ENCODE measurements at regions of chr6 and their contacts with region 1.

Region 1: DNA sequence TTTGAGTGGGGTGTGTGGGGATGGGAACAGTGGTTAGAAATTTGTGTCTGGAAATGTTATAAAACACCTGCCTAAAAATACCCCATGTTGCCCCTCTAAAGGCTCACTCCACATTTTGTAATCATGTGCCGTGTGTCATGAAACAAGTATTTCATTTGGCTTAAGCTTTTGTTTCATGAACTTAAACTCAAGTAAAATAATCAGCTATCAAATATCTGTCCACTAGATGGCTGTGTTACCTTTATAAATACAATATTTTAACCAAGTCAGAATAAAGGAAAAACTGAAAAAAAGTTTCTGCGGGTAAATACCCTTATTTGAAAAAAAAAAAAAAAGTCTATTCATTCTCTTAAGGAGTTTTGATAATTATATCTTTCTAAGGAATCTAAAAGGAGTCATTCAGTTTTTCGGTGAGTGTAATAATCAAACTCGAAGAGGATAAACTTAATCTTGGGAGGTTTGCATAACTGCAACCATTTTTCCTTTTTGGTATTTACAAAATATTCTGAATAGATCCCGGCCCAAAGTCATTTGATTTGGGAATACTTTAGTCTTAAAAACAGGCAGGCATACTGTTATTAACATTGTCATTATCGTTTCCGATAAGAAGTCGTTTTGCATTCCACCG is 29.9 kb upstream of the MTRF1L start:
- DNase-seq: no peak
- H3K4me3 ChIP-seq: no peak overlapping the region
- H3K27ac ChIP-seq: no peak overlapping the region
- H3K4me1 ChIP-seq: no peaks in the 10 kb centered on the region
- H3K27me3 ChIP-seq: no peaks in the 10 kb centered on the region
- CTCF ChIP-seq: peak; percentile 34

Region 2: DNA sequence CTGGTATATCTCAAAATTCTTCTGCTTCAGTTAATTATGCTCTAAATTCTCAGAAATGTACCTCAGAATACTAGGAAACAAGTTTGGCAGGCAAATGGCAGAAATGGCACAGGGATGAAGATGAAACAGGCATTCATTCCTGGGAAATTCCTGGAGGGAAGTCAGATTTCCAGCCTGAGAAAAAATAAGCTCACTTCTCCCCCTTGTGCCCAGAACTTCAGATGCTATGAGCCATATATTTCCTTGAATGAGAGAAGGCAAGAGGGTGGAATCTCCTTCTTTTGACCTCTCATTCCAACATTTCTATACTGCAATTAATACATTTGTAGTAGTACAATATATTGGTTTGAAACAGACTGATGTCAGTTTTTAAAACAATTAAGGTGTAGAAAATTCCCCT is 75.9 kb after region 1 on chr6:
- intact Hi-C with region 1: loop called (anchors 5 kb)
- DNase-seq: no peak
- H3K4me3 ChIP-seq: no peak overlapping the region
- H3K27ac ChIP-seq: no peak overlapping the region
- H3K4me1 ChIP-seq: no peaks in the 10 kb centered on the region
- H3K27me3 ChIP-seq: no peaks in the 10 kb centered on the region
- CTCF ChIP-seq: no peak

Region 3: DNA sequence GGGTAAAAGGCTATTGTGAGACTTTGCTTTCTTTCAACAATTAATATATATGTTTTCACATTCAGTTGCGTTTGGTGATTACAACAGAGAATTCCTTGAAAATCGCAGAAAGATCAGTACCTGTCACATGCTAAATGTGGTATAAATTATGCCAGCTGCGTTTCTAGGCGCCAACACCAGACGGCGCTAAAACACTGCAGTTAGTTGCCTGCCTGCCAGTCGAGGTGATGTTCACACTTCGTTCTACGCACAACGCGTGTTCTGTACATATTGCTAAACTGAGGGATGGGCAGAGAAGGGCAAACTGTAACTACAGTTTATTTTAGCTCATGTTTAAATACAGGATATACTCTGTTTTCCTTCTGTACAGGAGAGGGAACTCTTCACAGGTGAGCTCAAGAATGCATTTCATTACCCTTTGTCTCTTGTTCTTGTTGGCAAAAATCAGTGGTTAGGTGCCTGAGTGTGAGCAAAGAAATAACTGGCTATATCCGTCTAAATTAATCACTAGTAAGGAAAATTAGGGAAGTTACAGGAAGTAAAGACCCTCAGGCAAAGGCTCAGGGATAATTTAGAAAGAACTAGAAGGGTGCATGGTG is 198.8 kb after region 1 on chr6:
- intact Hi-C with region 1: loop called (anchors 10 kb)
- DNase-seq: peak; percentile 61
- H3K4me3 ChIP-seq: no peak overlapping the region
- H3K27ac ChIP-seq: no peak overlapping the region
- H3K4me1 ChIP-seq: no peaks in the 10 kb centered on the region
- H3K27me3 ChIP-seq: no peaks in the 10 kb centered on the region
- CTCF ChIP-seq: peak; percentile 83

Region 4: GRCh38 chr6:153312641-153313040 is 280.3 kb after region 1 on chr6:
- intact Hi-C with region 1: loop called (anchors 10 kb)
- DNase-seq: peak; percentile 35
- H3K4me3 ChIP-seq: no peak overlapping the region
- H3K27ac ChIP-seq: no peak overlapping the region
- H3K4me1 ChIP-seq: no peaks in the 10 kb centered on the region
- H3K27me3 ChIP-seq: no peaks in the 10 kb centered on the region
- CTCF ChIP-seq: peak; percentile 38

Region 5: DNA sequence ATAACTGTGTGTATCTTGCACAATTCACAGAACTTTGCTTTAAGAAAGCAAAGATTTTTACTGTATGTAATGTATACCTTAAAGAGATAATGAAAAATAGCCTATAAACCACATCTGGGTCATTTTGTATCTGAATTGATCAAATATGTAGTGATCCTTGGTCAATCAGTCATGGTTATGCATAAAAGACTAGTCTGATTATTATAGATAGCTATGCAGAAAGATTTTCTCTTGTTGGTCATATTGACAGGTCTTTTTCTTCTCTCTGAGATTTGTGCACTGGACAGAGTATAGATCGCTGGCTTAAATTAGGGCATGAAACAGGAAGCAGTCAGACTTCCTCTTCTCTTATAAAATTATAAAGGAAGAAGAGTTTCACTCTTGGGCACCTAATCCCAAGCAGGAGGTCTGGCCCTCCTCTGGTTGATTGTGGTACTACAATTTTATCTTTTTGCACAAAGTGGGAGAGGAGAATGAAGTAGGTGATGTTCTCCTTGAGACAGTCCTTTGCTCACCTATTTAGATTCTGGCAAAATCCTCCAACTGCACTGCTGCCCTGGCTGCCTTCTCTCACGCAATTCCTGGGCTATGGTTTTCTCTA is 479.6 kb after region 1 on chr6:
- intact Hi-C with region 1: loop called (anchors 10 kb)
- DNase-seq: no peak
- H3K4me3 ChIP-seq: no peak overlapping the region
- H3K27ac ChIP-seq: no peak overlapping the region
- H3K4me1 ChIP-seq: no peaks in the 10 kb centered on the region
- H3K27me3 ChIP-seq: no peaks in the 10 kb centered on the region
- CTCF ChIP-seq: peak; percentile 54

Measured in colonic mucosa (tissue), 4 donors.